ENCODE measurements at regions of chr11 and their contacts with region 1.

Region 1: GRCh38 chr11:65013692-65014145 is 241 bp upstream of the ARL2 start:
- DNase-seq: peak; percentile 87
- ATAC-seq: peak; percentile 93
- H3K4me3 ChIP-seq: peak overlapping the region; percentile 57
- H3K27ac ChIP-seq: peak overlapping the region; percentile 83
- H3K4me1 ChIP-seq: peaks cover 5% of the 10 kb centered on the region
- H3K27me3 ChIP-seq: no peaks in the 10 kb centered on the region
- CTCF ChIP-seq: no peak
- POLR2A ChIP-seq: peak; percentile 70
- RAD21 ChIP-seq: peak; percentile 69; the same call in 1 of the 2 replicates

Region 2: DNA sequence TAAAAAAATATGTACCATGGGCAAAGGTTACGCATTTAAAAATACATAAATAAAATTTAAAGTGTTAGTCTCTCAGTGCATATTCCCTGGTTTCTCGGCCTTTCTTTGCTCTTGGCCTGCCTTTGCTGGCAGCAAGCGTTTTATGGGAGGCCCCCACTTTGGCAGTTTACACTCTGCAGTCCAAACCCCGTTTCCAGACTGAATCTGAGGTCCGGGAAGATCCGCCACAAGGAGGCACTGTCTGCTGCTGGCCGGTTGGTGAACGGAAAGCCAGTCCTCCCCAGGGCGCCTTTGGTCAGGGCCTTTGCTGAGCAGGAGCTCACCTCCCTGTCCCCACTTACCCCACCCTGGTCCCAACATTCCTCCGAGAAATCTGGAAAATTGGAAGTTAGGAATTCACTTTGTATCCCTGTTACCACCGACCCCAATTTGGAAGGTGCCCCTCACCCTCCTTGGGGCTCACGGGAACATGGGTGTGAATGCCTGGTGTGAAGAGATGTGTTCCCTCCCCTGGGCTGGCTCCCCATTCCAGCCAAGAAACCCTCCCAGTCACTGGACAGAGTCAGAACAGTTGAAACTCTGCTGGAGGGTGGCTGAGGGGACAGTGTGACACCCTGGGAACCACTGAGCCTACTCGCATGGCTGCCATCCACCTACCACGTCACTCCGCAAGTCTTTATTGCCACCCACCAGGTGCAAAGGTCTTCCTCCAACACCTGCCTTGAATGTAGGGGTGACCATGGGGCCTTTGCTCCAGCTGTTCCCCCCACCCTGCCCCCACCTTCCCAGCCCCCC is 226.0 kb before region 1 on chr11:
- CTCF ChIA-PET with region 1: no interaction called
- POLR2A ChIA-PET with region 1: no interaction called
- dilution Hi-C with region 1: no loop called
- in situ Hi-C with region 1: no loop called
- intact Hi-C with region 1: loop called (anchors 2 kb)
- DNase-seq: peak; percentile 33
- ATAC-seq: peak; percentile 89
- H3K4me3 ChIP-seq: no peak overlapping the region
- H3K27ac ChIP-seq: no peak overlapping the region
- H3K4me1 ChIP-seq: no peaks in the 10 kb centered on the region
- H3K27me3 ChIP-seq: no peaks in the 10 kb centered on the region
- CTCF ChIP-seq: peak; percentile 64
- POLR2A ChIP-seq: no peak
- RAD21 ChIP-seq: peak; percentile 69

Region 3: GRCh38 chr11:64803163-64803845 is 210.4 kb before region 1 on chr11 and contains the start of gene MAP4K2:
- CTCF ChIA-PET with region 1: no interaction called
- POLR2A ChIA-PET with region 1: interaction called, 14 read pairs
- dilution Hi-C with region 1: no loop called
- in situ Hi-C with region 1: no loop called
- intact Hi-C with region 1: no loop called
- DNase-seq: peak; percentile 68
- ATAC-seq: peak; percentile 97
- H3K4me3 ChIP-seq: peak within 1 kb of the TSS; percentile 84
- H3K27ac ChIP-seq: peak within 1 kb of the TSS; percentile 27
- H3K4me1 ChIP-seq: peaks cover 10% of the 10 kb centered on the region
- H3K27me3 ChIP-seq: no peaks in the 10 kb centered on the region
- CTCF ChIP-seq: peak; percentile 38; the same call in 1 of the 2 replicates
- POLR2A ChIP-seq: peak; percentile 69
- RAD21 ChIP-seq: 0 out of 2 replicates have a peak, but pooled peaks have one; percentile 20
- total RNA-seq, gene MAP4K2: 9.2 and 11.7 TPM in 2 replicates

Region 4: DNA sequence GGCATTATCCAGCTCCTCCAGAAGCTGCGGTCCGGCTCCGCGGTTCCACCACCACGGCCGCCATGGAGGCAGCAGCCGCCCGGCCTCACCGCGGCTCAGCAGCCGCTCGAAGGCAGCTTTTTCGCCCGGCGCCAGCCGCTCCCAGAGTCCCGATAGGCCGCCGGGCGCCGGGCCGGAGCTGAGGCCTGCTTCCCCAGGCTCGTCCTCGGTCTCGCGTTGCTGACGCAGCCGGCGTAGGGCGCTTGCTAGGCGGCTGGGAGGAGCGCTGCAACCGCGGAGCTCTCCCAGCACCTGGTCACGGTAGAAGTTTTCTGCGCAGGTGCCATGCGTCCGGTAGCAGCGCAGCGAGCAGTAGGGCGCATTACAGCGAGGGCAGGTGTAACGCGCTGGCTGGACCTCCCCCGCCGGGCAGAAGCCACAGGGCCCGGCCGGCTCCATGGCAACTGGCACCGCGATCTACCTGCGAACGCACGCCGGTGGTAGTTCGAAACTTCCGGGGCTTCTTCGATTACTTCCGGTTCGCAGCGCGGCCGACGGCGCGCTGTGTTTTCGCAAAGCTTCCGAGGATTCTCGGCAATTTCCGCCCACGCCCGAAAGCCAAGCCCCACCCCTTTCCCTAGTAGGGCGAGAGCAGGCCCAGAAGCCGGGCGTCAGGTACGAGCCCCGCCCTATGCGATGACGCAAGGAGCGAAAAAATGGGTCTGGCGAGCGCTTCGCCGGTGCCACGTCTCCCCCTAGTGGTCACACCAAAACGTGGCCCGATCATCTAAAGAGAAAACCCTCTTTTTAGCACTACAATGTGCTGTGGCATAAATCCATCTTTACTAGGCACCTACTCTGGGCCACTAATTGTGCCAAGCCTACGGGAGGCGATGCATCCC is 103.7 kb after region 1 on chr11 and contains the start of gene ZNHIT2:
- CTCF ChIA-PET with region 1: no interaction called
- POLR2A ChIA-PET with region 1: no interaction called
- dilution Hi-C with region 1: no loop called
- in situ Hi-C with region 1: no loop called
- intact Hi-C with region 1: loop called (anchors 2 kb)
- DNase-seq: peak; percentile 98
- ATAC-seq: peak; percentile 78
- H3K4me3 ChIP-seq: peak within 1 kb of the TSS; percentile 69
- H3K27ac ChIP-seq: peak within 1 kb of the TSS; percentile 47
- H3K4me1 ChIP-seq: peaks cover 14% of the 10 kb centered on the region
- H3K27me3 ChIP-seq: no peaks in the 10 kb centered on the region
- CTCF ChIP-seq: peak; percentile 98
- POLR2A ChIP-seq: peak; percentile 78
- RAD21 ChIP-seq: peak; percentile 90
- total RNA-seq, gene ZNHIT2: 3.6 and 3.9 TPM in 2 replicates

Measured in IMR-90 (cell line).